Activated CD4-positive, alpha-beta T cell treated with anti-CD3 and anti-CD28 coated beads for 36 hours (primary cell): ENCODE measurements at regions of chr17 and their contacts with region 1.

Region 1: GRCh38 chr17:51298508-51299371 is 38.4 kb downstream of the UTP18 start:
- DNase-seq: no peak
- ATAC-seq: peak; percentile 39
- H3K4me3 Mint-ChIP-seq: no peak overlapping the region
- H3K27ac Mint-ChIP-seq: no peak overlapping the region
- H3K4me1 Mint-ChIP-seq: peaks cover 2% of the 10 kb centered on the region
- H3K27me3 Mint-ChIP-seq: no peaks in the 10 kb centered on the region

Region 2: GRCh38 chr17:51351890-51352289 is 53.1 kb after region 1 on chr17:
- CTCF ChIA-PET with region 1: no interaction called
- POLR2A ChIA-PET with region 1: no interaction called
- intact Hi-C with region 1: loop called in 1 of 2 experiments (anchors 5 kb)
- DNase-seq: no peak
- ATAC-seq: no peak
- H3K4me3 Mint-ChIP-seq: no peak overlapping the region
- H3K27ac Mint-ChIP-seq: no peak overlapping the region
- H3K4me1 Mint-ChIP-seq: no peaks in the 10 kb centered on the region
- H3K27me3 Mint-ChIP-seq: no peaks in the 10 kb centered on the region

Region 3: GRCh38 chr17:51499897-51500296 is 201.2 kb after region 1 on chr17:
- CTCF ChIA-PET with region 1: no interaction called
- POLR2A ChIA-PET with region 1: no interaction called
- intact Hi-C with region 1: no loop called
- DNase-seq: no peak
- ATAC-seq: no peak
- H3K4me3 Mint-ChIP-seq: no peak overlapping the region
- H3K27ac Mint-ChIP-seq: no peak overlapping the region
- H3K4me1 Mint-ChIP-seq: no peaks in the 10 kb centered on the region
- H3K27me3 Mint-ChIP-seq: peaks cover 3% of the 10 kb centered on the region

Region 4: GRCh38 chr17:51640108-51640622 is 341.4 kb after region 1 on chr17:
- CTCF ChIA-PET with region 1: interaction called, 11 read pairs
- POLR2A ChIA-PET with region 1: no interaction called
- intact Hi-C with region 1: loop called in 1 of 2 experiments (anchors 5 kb)
- DNase-seq: peak; percentile 39
- ATAC-seq: no peak
- H3K4me3 Mint-ChIP-seq: no peak overlapping the region
- H3K27ac Mint-ChIP-seq: no peak overlapping the region
- H3K4me1 Mint-ChIP-seq: no peaks in the 10 kb centered on the region
- H3K27me3 Mint-ChIP-seq: peaks cover 16% of the 10 kb centered on the region

Region 5: GRCh38 chr17:51734462-51734861 is 435.7 kb after region 1 on chr17:
- CTCF ChIA-PET with region 1: interaction called, 4 read pairs
- POLR2A ChIA-PET with region 1: no interaction called
- intact Hi-C with region 1: loop called in 1 of 2 experiments (anchors 10 kb)
- DNase-seq: peak; percentile 48
- ATAC-seq: no peak
- H3K4me3 Mint-ChIP-seq: no peak overlapping the region
- H3K27ac Mint-ChIP-seq: no peak overlapping the region
- H3K4me1 Mint-ChIP-seq: no peaks in the 10 kb centered on the region
- H3K27me3 Mint-ChIP-seq: peaks cover 17% of the 10 kb centered on the region